Heart left ventricle (tissue), 16 donors: ENCODE measurements at regions of chr11 and their contacts with region 1.

Region 1: DNA sequence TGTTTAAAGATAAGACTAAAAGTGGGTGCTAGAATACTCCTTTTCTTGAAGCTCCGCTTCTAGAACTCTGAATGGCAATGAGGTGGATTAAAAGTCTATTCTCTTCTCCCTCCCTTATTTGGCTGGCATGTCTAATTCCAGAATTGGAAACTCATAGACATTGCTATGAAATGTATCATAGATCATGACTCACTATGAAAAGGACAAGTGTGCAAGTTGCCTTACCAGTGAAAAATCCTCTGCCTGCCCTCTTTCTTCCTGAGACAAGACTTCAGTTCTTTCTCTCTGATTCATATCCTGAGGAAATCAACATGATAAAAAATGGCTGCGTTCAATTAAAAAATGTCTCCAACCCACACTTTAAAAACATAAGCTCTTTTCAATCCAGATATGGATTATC is 73.2 kb upstream of the BLID start:
- DNase-seq: no peak
- ATAC-seq: peak; percentile 32 to 88 (median 80)
- H3K4me3 ChIP-seq: no peak overlapping the region
- H3K27ac ChIP-seq: peak overlapping the region in 8 of 12 donors; percentile 8 to 62 (median 46)
- H3K4me1 ChIP-seq: peaks cover 0 to 13% (median 1%) of the 10 kb centered on the region in 12 donors
- H3K27me3 ChIP-seq: no peaks in the 10 kb centered on the region
- CTCF ChIP-seq: no peak
- POLR2A ChIP-seq: no peak

Region 2: GRCh38 chr11:122045181-122045586 is 144.0 kb before region 1 on chr11:
- intact Hi-C with region 1: no loop called
- DNase-seq: no peak
- ATAC-seq: no peak
- H3K4me3 ChIP-seq: no peak overlapping the region
- H3K27ac ChIP-seq: no peak overlapping the region
- H3K4me1 ChIP-seq: no peaks in the 10 kb centered on the region
- H3K27me3 ChIP-seq: no peaks in the 10 kb centered on the region
- CTCF ChIP-seq: no peak
- POLR2A ChIP-seq: no peak

Region 3: GRCh38 chr11:122115524-122116379 is 73.5 kb before region 1 on chr11 and contains the start of gene BLID:
- intact Hi-C with region 1: loop called in 1 of 10 experiments (anchors 5 kb)
- DNase-seq: peak in 1 of 5 donors; percentile 29
- ATAC-seq: peak in 3 of 4 donors; percentile 36 to 55 (median 48)
- H3K4me3 ChIP-seq: no peak within 1 kb of the TSS
- H3K27ac ChIP-seq: no peak within 1 kb of the TSS
- H3K4me1 ChIP-seq: peaks cover 0 to 5% (median 0%) of the 10 kb centered on the region in 12 donors
- H3K27me3 ChIP-seq: no peaks in the 10 kb centered on the region
- CTCF ChIP-seq: peak; percentile 20 to 60 (median 37)
- POLR2A ChIP-seq: no peak
- total RNA-seq, gene BLID: not detected

Region 4: DNA sequence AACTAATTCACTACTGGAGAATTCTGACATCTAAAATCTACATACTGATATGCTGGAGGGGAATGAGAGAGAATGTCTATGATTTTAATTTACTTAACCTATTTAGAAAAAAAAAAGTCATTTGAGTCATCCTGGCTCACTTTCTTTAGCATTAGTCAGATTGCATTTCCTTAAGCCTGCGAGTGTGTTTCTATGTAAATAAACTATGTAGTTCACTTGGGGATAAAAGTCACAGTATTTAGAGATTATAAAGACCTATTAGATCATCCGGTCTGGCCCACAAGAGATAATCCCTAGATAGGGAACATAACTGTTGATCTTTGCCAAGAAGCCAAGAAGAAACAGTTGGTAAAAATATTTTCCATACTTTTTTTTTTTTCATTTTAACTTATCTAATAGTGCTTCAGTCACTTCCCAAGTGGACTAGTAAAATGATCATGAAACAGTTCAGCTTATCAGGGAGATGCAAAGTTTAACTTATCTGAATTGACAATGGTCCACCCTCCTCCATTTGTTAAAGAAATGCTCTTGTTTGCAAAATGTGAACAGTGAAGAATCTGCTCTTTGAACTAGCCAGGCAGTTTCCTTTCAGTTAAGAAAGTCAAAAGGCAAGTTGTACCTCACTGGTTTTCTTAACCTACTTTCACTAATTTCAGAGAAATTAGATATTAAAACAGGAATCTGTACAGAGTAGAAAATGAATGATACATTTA is 52.0 kb before region 1 on chr11:
- intact Hi-C with region 1: loop called in 1 of 10 experiments (anchors 10 kb)
- DNase-seq: no peak
- ATAC-seq: peak in 3 of 4 donors; percentile 72 to 90 (median 73)
- H3K4me3 ChIP-seq: no peak overlapping the region
- H3K27ac ChIP-seq: peak overlapping the region in 8 of 12 donors; percentile 2 to 51 (median 40)
- H3K4me1 ChIP-seq: peaks cover 0 to 23% (median 0%) of the 10 kb centered on the region in 12 donors
- H3K27me3 ChIP-seq: no peaks in the 10 kb centered on the region
- CTCF ChIP-seq: no peak
- POLR2A ChIP-seq: no peak

Region 5: DNA sequence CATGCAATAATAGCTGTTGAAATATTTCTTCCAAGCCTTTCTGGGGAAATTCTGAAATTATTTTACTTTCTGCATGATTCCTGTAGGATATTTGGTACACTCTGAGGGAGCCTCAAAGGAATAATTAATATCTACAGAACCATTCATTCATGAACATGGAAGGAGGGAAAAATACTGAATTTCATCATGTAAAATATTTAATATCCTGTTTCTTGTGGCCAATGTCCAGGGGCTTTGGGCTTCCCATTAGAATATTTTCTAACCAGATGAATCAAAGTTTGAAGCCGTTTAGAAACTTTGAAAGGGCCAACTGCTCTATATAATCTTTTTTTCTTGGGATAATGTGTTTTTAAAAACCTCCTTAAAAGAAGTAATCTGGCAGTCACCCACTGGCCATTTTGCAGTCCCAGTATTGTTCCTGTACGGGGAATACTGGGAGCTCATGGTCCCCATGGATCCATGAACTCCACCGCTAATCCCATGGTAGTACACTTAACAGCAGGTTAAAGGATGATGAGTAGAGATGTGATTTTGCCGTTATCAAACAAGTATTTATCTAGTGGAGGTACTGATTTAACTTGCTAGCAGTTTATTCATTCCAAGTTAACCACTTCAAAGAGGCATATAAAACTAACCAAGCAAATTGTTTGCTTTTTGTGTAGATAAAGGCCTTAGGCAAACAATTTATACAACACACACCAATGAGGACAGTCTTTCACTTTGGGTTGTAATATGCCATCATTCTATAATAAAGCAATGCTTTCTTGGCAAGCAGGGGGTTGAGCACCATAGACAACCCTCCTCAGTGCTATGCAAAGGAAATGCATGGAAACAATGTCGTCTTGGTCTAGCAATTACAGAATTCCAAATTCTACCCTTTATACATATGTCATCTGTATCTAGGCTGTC is 38.8 kb before region 1 on chr11:
- intact Hi-C with region 1: no loop called
- DNase-seq: no peak
- ATAC-seq: no peak
- H3K4me3 ChIP-seq: no peak overlapping the region
- H3K27ac ChIP-seq: peak overlapping the region in 4 of 12 donors; percentile 4 to 61 (median 16)
- H3K4me1 ChIP-seq: peaks cover 0 to 23% (median 0%) of the 10 kb centered on the region in 12 donors
- H3K27me3 ChIP-seq: no peaks in the 10 kb centered on the region
- CTCF ChIP-seq: no peak
- POLR2A ChIP-seq: no peak

Region 6: DNA sequence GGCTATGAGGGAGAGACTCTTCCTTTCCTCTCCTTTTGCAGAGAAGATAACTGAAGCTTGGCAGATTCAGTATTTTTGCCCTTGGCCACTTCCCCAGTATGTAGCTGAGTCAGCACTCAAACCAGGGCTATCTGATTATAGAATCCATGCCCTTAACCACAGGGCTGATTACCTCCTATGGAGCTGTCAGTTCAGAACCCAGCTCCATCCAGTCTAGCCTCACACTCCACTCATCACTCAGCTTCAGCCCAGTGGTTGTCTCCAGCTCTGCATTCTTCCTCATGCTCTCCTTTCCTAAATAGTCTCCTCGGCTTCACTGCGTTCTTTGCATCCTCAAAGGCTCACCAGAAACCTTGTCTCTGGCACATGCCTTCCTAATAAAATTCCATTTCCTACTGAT is 78.4 kb after region 1 on chr11:
- intact Hi-C with region 1: no loop called
- DNase-seq: no peak
- ATAC-seq: no peak
- H3K4me3 ChIP-seq: no peak overlapping the region
- H3K27ac ChIP-seq: no peak overlapping the region
- H3K4me1 ChIP-seq: peaks cover 0 to 20% (median 0%) of the 10 kb centered on the region in 12 donors
- H3K27me3 ChIP-seq: no peaks in the 10 kb centered on the region
- CTCF ChIP-seq: no peak
- POLR2A ChIP-seq: no peak

Region 7: DNA sequence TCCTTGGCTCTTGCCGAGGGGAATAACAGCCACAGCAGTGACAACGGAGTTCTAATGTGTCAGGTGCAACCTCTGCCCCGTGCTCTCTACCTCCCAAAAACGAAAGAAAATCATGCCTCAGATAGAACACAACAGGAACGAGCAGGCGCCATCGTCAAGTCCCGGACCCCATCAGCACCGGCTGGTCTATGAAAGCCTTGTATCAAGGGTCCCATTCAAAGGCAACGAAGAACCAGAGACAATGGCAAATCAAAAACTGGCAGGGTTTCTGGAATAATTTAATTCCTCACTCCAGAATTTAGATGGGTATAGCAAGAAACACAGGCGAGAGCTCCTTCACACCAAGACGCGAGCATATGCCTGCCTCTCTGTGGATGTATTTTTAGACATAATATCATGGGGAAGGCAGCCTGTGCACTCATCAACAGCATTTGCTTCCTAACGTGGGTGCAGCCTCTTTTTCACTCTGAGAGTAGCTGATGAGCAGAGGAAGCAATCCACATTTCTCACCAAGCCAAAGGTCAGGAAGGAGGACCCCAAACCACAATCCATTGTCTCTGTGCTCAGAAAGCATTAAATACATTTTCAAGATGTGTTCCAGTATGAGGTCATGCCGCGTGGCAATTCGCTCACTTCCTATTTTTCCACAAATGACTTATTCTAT is 120.2 kb after region 1 on chr11:
- intact Hi-C with region 1: no loop called
- DNase-seq: peak in 3 of 5 donors; percentile 23 to 35 (median 33)
- ATAC-seq: peak; percentile 82 to 96 (median 90)
- H3K4me3 ChIP-seq: peak overlapping the region; percentile 0 to 57 (median 46)
- H3K27ac ChIP-seq: peak overlapping the region in 11 of 12 donors; percentile 3 to 90 (median 62)
- H3K4me1 ChIP-seq: peaks cover 0 to 33% (median 3%) of the 10 kb centered on the region in 12 donors
- H3K27me3 ChIP-seq: no peaks in the 10 kb centered on the region
- CTCF ChIP-seq: no peak
- POLR2A ChIP-seq: peak in 1 of 2 donors; percentile 34